Pancreas (tissue), 10 donors: ENCODE measurements at regions of chr4 and their contacts with region 1.

Region 1: DNA sequence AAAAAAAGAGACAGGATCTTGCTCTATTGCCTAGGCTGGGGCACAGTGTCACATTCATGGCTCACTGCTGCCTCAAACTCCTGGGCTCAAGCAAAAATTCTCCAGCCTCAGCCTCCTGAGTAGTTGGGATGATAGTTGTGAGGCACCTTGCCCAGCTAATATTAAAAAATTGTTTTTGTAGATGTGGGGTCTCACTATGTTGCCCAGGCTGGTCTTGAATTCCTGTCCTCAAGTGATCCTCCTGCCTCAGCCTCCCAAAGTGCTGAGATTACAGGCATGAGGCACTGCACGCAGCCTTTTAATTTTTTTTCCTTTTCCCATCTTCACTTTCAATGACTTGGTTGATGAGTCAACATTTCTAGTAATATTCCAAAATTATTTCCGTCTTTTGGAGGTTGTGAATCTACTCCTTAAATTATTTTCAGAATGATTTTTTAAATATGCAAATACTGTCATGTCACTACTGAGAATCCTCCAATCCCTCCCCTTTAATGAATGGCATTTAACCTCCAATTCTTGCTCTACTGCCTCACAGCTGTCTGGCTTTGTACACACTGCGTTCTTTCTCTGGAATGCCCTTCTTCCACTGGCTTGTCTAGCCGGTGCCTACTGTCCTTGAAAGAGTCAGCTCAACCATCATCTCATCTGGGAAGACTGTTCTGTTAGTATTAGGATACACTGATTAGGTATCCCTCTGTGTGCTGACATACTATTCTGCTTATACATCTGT is 27.5 kb upstream of the DCTD start:
- DNase-seq: no peak
- ATAC-seq: no peak
- H3K4me3 ChIP-seq: no peak overlapping the region
- H3K27ac ChIP-seq: no peak overlapping the region
- H3K4me1 ChIP-seq: no peaks in the 10 kb centered on the region
- H3K27me3 ChIP-seq: no peaks in the 10 kb centered on the region
- CTCF ChIP-seq: no peak

Region 2: GRCh38 chr4:183256756-183257385 is 312.2 kb after region 1 on chr4:
- intact Hi-C with region 1: loop called in 2 of 3 experiments (anchors 5 to 10 kb)
- DNase-seq: peak in 4 of 6 donors; percentile 25 to 72 (median 48)
- ATAC-seq: peak in 3 of 4 donors; percentile 73 to 80 (median 75)
- H3K4me3 ChIP-seq: no peak overlapping the region
- H3K27ac ChIP-seq: no peak overlapping the region
- H3K4me1 ChIP-seq: peaks cover 0 to 8% (median 0%) of the 10 kb centered on the region in 3 donors
- H3K27me3 ChIP-seq: no peaks in the 10 kb centered on the region
- CTCF ChIP-seq: peak; percentile 40 to 83 (median 64)